GM12878 (cell line): ENCODE measurements at regions of chr10 and their contacts with region 1.

Region 1: DNA sequence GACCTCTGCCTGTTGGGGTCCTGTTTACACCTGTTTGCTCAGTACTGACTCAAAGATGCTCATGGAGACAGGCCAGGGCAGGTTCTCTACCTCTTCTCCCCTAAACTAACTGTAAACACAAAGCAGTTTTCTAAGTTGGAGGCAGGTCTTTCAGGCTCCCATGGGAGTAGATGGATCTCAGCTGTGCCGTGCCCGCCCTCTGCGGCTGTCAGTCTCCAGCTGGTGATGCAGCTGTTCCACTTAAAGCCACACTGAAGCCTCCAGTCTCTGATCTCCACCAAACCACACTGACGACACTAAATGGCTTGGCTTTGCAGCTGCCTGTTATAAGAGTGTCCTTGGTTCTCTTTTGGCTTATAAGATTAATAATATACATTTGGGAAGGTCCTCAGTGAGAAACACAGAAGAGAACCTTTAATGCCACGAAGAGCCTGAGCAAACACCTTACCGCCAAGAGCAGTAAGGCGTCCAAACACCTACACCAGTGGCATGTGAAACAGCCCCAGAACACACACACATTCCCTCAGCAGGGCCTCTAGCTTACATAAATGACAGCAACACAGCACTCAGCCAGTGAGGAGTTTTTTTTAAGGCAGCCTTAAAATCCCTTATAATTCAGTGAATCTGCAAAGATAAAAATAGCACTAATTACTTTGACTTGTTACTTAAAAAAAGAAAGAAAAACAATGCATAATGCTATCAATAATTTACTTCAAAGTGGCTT is 60.4 kb upstream of the KCNIP2 start:
- DNase-seq: peak; percentile 88
- ATAC-seq: peak; percentile 77
- H3K4me3 ChIP-seq: peak overlapping the region; percentile 4; the same call in 1 of the 2 replicates
- H3K27ac ChIP-seq: peak overlapping the region; percentile 91
- H3K4me1 ChIP-seq: peaks cover 45% of the 10 kb centered on the region
- H3K27me3 ChIP-seq: no peaks in the 10 kb centered on the region
- CTCF ChIP-seq: 0 out of 6 replicates have a peak, but pooled peaks of 1 of the 3 experiments have one; percentile 0
- EP300 ChIP-seq: peak; percentile 71 to 92; a peak in 3 of 4 replicates
- POLR2A ChIP-seq: peak; percentile 44; the same call in 1 of the 2 replicates
- RAD21 ChIP-seq: no peak

Region 2: DNA sequence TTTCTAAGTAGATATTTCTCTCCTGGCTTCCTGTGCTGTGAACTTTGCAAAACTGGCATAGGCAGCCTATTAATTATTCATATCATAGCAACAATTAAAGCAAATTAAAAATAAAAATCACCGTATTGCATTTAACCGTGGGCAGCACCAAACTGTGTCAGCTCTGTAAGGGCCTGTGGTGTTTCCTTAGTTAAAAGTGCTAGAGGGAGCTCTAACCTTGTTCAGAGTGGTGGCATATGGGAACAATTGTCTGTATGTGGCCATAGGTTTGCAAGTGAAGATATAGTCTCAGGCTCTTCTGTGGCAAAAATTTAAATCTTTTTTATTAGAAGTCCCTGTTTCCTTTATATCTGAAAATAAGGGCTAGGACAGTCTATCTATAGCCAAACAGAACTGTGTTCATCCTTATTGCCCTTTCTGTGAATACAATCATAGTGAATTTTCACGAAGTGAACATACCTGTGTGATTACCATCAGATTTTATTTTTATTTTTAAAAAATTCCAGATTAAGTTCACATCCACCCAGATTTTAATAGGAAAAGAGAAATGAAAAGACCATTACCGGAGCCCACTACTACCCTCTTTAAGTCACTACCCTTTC is 408.6 kb before region 1 on chr10:
- CTCF ChIA-PET with region 1: no interaction called
- POLR2A ChIA-PET with region 1: no interaction called
- RAD21 ChIA-PET with region 1: no interaction called
- SMC1A ChIA-PET with region 1: no interaction called
- in situ Hi-C with region 1: no loop called
- intact Hi-C with region 1: no loop called
- DNase-seq: no peak
- ATAC-seq: peak; percentile 75
- H3K4me3 ChIP-seq: no peak overlapping the region
- H3K27ac ChIP-seq: no peak overlapping the region
- H3K4me1 ChIP-seq: no peaks in the 10 kb centered on the region
- H3K27me3 ChIP-seq: no peaks in the 10 kb centered on the region
- CTCF ChIP-seq: peak; percentile 22 to 41 (median 40); a peak in 5 of 6 replicates
- EP300 ChIP-seq: no peak
- POLR2A ChIP-seq: no peak
- RAD21 ChIP-seq: peak; percentile 65

Region 3: DNA sequence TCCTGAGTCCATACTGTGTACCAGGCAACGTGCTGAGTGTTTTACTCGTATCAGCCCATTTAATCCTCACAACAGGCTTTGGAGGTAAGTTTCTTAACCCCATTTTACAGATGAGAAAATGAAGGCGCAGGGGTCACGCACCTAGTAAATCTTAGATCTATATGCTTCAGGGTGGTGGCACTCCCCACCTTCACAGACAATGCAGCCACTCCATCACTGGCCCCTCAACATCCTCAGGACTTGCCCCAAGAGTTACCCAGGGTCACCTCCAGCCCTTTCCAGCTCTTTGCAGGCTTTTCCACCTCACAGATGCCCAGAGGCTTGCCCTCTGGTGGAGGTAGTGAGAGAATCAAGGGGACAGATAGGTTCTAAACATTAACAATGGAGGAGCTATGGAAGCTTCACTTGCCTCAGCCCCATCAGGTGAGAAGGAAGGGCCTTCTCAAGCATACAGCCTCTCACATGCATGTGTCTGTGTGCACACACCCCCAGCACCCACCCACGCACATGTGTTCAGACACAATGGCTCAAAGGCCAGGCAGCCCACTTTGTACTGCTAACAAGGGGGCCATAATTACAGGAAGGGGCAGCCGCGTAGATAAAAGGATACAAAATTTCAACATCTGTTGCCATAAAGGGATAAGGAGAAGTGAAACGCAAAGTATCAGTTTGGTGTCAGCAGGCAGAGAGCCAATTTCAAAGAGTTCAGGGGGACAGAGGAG is 286.7 kb before region 1 on chr10:
- CTCF ChIA-PET with region 1: no interaction called
- POLR2A ChIA-PET with region 1: no interaction called
- RAD21 ChIA-PET with region 1: no interaction called
- SMC1A ChIA-PET with region 1: no interaction called
- in situ Hi-C with region 1: no loop called
- intact Hi-C with region 1: no loop called
- DNase-seq: peak; percentile 33
- ATAC-seq: peak; percentile 83
- H3K4me3 ChIP-seq: no peak overlapping the region
- H3K27ac ChIP-seq: peak overlapping the region; percentile 62
- H3K4me1 ChIP-seq: peaks cover 19% of the 10 kb centered on the region
- H3K27me3 ChIP-seq: no peaks in the 10 kb centered on the region
- CTCF ChIP-seq: peak; percentile 0 to 22 (median 16); a peak in 1 of 6 replicates
- EP300 ChIP-seq: peak; percentile 46 to 50; a peak in 2 of 4 replicates
- POLR2A ChIP-seq: 0 out of 2 replicates have a peak, but pooled peaks have one; percentile 6
- RAD21 ChIP-seq: no peak

Region 4: GRCh38 chr10:101716851-101717659 is 186.9 kb before region 1 on chr10:
- CTCF ChIA-PET with region 1: no interaction called
- POLR2A ChIA-PET with region 1: no interaction called
- RAD21 ChIA-PET with region 1: no interaction called
- SMC1A ChIA-PET with region 1: no interaction called
- in situ Hi-C with region 1: no loop called
- intact Hi-C with region 1: no loop called
- DNase-seq: no peak
- ATAC-seq: peak; percentile 27
- H3K4me3 ChIP-seq: no peak overlapping the region
- H3K27ac ChIP-seq: no peak overlapping the region
- H3K4me1 ChIP-seq: no peaks in the 10 kb centered on the region
- H3K27me3 ChIP-seq: no peaks in the 10 kb centered on the region
- CTCF ChIP-seq: no peak
- EP300 ChIP-seq: no peak
- POLR2A ChIP-seq: no peak
- RAD21 ChIP-seq: no peak

Region 5: DNA sequence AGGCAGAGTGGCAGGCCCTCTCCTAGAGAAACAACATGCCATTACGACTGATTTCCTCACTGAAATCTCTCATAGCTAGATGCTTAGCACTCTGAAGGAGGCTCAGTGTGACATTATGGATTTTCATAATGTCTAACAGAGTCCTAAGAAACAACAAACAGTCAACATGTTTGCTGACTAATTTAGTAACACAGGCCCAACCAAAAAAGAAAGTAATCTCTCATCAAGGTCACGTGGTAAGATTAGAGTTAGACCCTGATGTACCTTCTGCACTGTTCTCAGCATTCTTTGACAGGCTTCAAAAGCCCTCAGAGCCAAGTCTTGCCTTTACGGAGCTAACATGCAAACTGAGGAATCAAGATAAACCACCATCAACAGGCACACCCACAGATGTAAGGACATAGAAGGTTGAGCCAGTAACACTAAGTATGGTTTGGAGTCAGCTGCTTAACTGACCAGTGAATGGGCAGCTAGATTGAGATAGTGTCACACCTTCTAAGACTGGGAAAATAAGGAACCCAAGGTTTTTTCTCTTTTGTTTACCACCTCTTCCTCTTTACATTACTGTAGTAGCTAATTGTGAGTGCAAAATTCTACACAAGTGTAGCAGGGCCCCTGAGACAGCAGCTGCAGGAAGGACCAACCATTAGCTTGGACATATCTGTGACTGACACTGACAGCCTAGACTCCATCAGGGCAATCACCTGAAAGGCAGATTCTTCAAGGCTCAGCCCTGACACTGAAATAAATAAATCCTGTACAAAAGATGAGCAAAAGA is 45.1 kb before region 1 on chr10:
- CTCF ChIA-PET with region 1: interaction called, 3 read pairs
- POLR2A ChIA-PET with region 1: no interaction called
- RAD21 ChIA-PET with region 1: no interaction called
- SMC1A ChIA-PET with region 1: interaction called, 11 read pairs
- in situ Hi-C with region 1: no loop called
- intact Hi-C with region 1: no loop called
- DNase-seq: peak; percentile 61
- ATAC-seq: peak; percentile 91
- H3K4me3 ChIP-seq: peak overlapping the region; percentile 28; the same call in 1 of the 2 replicates
- H3K27ac ChIP-seq: peak overlapping the region; percentile 83
- H3K4me1 ChIP-seq: peaks cover 32% of the 10 kb centered on the region
- H3K27me3 ChIP-seq: no peaks in the 10 kb centered on the region
- CTCF ChIP-seq: no peak
- EP300 ChIP-seq: peak in 1 of 2 experiments; percentile 37; a peak in 1 of 4 replicates
- POLR2A ChIP-seq: peak; percentile 45; the same call in 1 of the 2 replicates
- RAD21 ChIP-seq: no peak

Region 6: DNA sequence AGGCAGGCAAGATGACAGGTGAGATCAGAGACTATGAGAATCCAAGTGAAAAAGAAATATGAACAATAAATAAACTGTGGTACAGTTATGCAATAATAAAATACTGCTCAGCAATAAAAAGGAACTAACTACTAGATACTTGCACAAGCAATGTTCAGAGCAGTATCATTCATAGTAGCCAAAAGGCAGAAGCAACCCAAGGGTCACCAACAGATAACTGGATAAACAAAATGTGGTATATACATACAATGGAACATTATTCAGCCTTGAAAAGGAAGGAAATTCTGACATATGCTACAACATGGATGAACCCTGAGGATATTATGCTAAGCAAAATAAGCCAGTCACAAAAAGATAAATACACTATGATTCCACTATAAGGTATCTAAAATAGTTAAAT is 16.6 kb after region 1 on chr10:
- CTCF ChIA-PET with region 1: interaction called, 12 read pairs
- POLR2A ChIA-PET with region 1: interaction called, 10 read pairs
- RAD21 ChIA-PET with region 1: interaction called, 31 read pairs
- SMC1A ChIA-PET with region 1: interaction called, 50 read pairs
- in situ Hi-C with region 1: no loop called
- intact Hi-C with region 1: no loop called
- DNase-seq: no peak
- ATAC-seq: no peak
- H3K4me3 ChIP-seq: no peak overlapping the region
- H3K27ac ChIP-seq: no peak overlapping the region
- H3K4me1 ChIP-seq: peaks cover 3% of the 10 kb centered on the region; the same call in 1 of the 2 replicates
- H3K27me3 ChIP-seq: no peaks in the 10 kb centered on the region
- CTCF ChIP-seq: no peak
- EP300 ChIP-seq: no peak
- POLR2A ChIP-seq: no peak
- RAD21 ChIP-seq: no peak

Region 7: GRCh38 chr10:101961591-101962498 is 57.9 kb after region 1 on chr10:
- CTCF ChIA-PET with region 1: interaction called, 6 read pairs
- POLR2A ChIA-PET with region 1: interaction called, 4 read pairs
- RAD21 ChIA-PET with region 1: interaction called, 5 read pairs
- SMC1A ChIA-PET with region 1: interaction called, 100 read pairs
- in situ Hi-C with region 1: no loop called
- intact Hi-C with region 1: no loop called
- DNase-seq: no peak
- ATAC-seq: no peak
- H3K4me3 ChIP-seq: no peak overlapping the region
- H3K27ac ChIP-seq: no peak overlapping the region
- H3K4me1 ChIP-seq: peaks cover 18% of the 10 kb centered on the region
- H3K27me3 ChIP-seq: no peaks in the 10 kb centered on the region
- CTCF ChIP-seq: no peak
- EP300 ChIP-seq: no peak
- POLR2A ChIP-seq: no peak
- RAD21 ChIP-seq: no peak

Region 8: DNA sequence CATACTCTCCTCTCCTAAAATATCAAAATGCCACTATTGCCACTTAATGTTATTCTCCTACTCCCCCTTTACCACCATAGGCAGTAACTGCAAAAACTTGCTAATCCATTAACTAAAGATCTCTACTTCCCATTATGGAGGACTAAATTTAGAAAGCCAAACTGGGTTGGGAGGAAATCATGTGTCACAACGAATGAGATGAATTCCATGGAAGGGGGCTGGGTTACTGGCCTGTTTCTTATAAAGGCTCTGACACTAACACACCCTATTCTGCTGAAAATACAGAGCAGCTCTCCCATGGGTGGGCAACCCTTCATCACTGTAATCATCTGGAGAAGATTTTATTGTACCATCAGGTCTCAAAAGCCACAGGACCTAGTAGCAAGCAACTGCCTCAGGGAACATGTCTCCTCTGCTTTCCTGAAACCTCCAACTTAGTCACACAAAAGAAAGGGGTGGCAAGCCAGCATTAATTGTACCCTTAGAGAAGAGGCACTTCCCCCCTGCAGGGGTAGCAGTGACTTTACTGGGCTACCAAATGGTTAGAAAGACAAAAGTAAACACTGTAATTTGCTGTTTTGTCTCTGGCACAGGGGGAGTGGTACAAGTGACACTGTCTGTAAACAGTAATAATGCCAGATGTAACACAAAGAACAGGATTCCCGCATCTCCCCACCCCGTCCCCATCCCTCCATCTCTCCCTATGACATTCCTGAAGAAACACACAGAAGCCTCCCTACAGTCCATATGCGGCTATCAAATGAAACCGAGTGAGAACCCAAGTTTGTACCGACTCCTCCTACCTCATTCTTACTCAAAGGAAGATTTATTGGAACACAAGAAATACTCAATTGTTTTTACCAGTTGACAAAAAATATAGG is 70.3 kb after region 1 on chr10:
- CTCF ChIA-PET with region 1: interaction called, 25 read pairs
- POLR2A ChIA-PET with region 1: interaction called, 35 read pairs
- RAD21 ChIA-PET with region 1: interaction called, 68 read pairs
- SMC1A ChIA-PET with region 1: interaction called, 100 read pairs
- in situ Hi-C with region 1: no loop called
- intact Hi-C with region 1: loop called (anchors 2 kb)
- DNase-seq: no peak
- ATAC-seq: no peak
- H3K4me3 ChIP-seq: 0 out of 2 replicates have a peak overlapping the region, but pooled peaks have one; percentile 42
- H3K27ac ChIP-seq: peak overlapping the region; percentile 99
- H3K4me1 ChIP-seq: peaks cover 50% of the 10 kb centered on the region
- H3K27me3 ChIP-seq: no peaks in the 10 kb centered on the region
- CTCF ChIP-seq: no peak
- EP300 ChIP-seq: no peak
- POLR2A ChIP-seq: no peak
- RAD21 ChIP-seq: no peak

Region 9: DNA sequence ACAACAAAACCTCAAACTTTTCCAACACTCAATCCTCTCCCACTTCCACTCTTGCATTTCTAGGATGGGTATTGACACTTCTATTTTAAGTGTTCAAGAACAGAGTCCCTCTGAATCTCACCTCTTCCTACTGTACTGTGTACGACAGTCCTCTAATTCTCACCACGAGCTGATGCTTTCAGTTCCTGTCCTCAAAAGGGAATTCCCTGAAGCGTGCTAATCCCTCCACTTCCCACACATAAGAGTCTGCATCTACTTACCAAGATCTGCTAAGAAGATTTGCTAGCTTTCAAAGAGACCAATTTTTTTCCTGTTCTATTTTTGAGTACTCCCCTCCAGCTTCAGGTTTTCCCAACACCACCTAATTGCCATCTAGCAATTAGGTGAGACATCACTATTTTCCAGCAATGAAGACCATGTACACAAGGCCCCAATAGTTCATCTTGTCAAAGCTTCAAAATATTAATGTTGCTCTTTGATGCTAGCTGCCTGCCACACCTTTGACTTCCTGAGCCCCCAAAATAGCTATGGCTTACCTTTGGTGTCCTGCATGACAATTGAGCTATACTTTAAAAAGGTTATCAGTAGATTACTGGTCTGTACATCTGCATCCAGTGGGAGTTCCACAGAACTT is 97.6 kb after region 1 on chr10:
- CTCF ChIA-PET with region 1: interaction called, 77 read pairs
- POLR2A ChIA-PET with region 1: interaction called, 26 read pairs
- RAD21 ChIA-PET with region 1: interaction called, 352 read pairs
- SMC1A ChIA-PET with region 1: interaction called, 369 read pairs
- in situ Hi-C with region 1: no loop called
- intact Hi-C with region 1: loop called (anchors 1 kb)
- DNase-seq: peak; percentile 95
- ATAC-seq: peak; percentile 84
- H3K4me3 ChIP-seq: peak overlapping the region; percentile 12; the same call in 1 of the 2 replicates
- H3K27ac ChIP-seq: peak overlapping the region; percentile 91
- H3K4me1 ChIP-seq: peaks cover 47% of the 10 kb centered on the region
- H3K27me3 ChIP-seq: no peaks in the 10 kb centered on the region
- CTCF ChIP-seq: no peak
- EP300 ChIP-seq: peak; percentile 93 to 98; a peak in 3 of 4 replicates
- POLR2A ChIP-seq: no peak
- RAD21 ChIP-seq: no peak

Region 10: GRCh38 chr10:102033787-102034186 is 129.8 kb after region 1 on chr10:
- CTCF ChIA-PET with region 1: no interaction called
- POLR2A ChIA-PET with region 1: no interaction called
- RAD21 ChIA-PET with region 1: no interaction called
- SMC1A ChIA-PET with region 1: no interaction called
- in situ Hi-C with region 1: no loop called
- intact Hi-C with region 1: no loop called
- DNase-seq: no peak
- ATAC-seq: no peak
- H3K4me3 ChIP-seq: no peak overlapping the region
- H3K27ac ChIP-seq: no peak overlapping the region
- H3K4me1 ChIP-seq: no peaks in the 10 kb centered on the region
- H3K27me3 ChIP-seq: no peaks in the 10 kb centered on the region
- CTCF ChIP-seq: no peak
- EP300 ChIP-seq: no peak
- POLR2A ChIP-seq: no peak
- RAD21 ChIP-seq: no peak